HEK293 (cell line): ENCODE measurements at regions of chr3 and their contacts with region 1.

Region 1: GRCh38 chr3:150408221-150409102 is at the start of gene TSC22D2:
- H3K4me3 ChIP-seq: peak within 1 kb of the TSS; percentile 87
- H3K27ac ChIP-seq: peak within 1 kb of the TSS; percentile 89
- H3K4me1 ChIP-seq: no peaks in the 10 kb centered on the region
- CTCF ChIP-seq: peak; percentile 62

Region 2: GRCh38 chr3:150286390-150287147 is 121.9 kb before region 1 on chr3:
- CTCF ChIA-PET with region 1: interaction called, 13 read pairs
- POLR2A ChIA-PET with region 1: interaction called, 3 read pairs
- H3K4me3 ChIP-seq: no peak overlapping the region
- H3K27ac ChIP-seq: no peak overlapping the region
- H3K4me1 ChIP-seq: no peaks in the 10 kb centered on the region
- CTCF ChIP-seq: no peak

Region 3: GRCh38 chr3:150371741-150372254 is 36.7 kb before region 1 on chr3:
- CTCF ChIA-PET with region 1: no interaction called
- POLR2A ChIA-PET with region 1: interaction called, 22 read pairs
- H3K4me3 ChIP-seq: peak overlapping the region; percentile 39
- H3K27ac ChIP-seq: no peak overlapping the region
- H3K4me1 ChIP-seq: no peaks in the 10 kb centered on the region
- CTCF ChIP-seq: no peak

Region 4: GRCh38 chr3:150577859-150578258 is 169.4 kb after region 1 on chr3:
- CTCF ChIA-PET with region 1: no interaction called
- POLR2A ChIA-PET with region 1: no interaction called
- H3K4me3 ChIP-seq: no peak overlapping the region
- H3K27ac ChIP-seq: no peak overlapping the region
- H3K4me1 ChIP-seq: no peaks in the 10 kb centered on the region
- CTCF ChIP-seq: no peak